CD8-positive, alpha-beta T cell (primary cell): ENCODE measurements at regions of chr22 and their contacts with region 1.

Region 1: GRCh38 chr22:44497218-44497904 is 672 bp downstream of the RTL6 start:
- DNase-seq: peak in 2 of 9 experiments; percentile 30 to 54
- ATAC-seq: no peak
- H3K4me3 ChIP-seq: peak overlapping the region; percentile 46 to 65
- H3K4me3 Mint-ChIP-seq: peak overlapping the region; percentile 77
- H3K27ac ChIP-seq: peak overlapping the region; percentile 64 to 81
- H3K27ac Mint-ChIP-seq: peak overlapping the region; percentile 81
- H3K4me1 ChIP-seq: peaks cover 44% of the 10 kb centered on the region
- H3K4me1 Mint-ChIP-seq: peaks cover 38% of the 10 kb centered on the region
- H3K27me3 ChIP-seq: no peaks in the 10 kb centered on the region
- H3K27me3 Mint-ChIP-seq: no peaks in the 10 kb centered on the region
- CTCF ChIP-seq: no peak

Region 2: GRCh38 chr22:43955040-43955882 is 542.1 kb before region 1 on chr22 and contains the start of gene SAMM50:
- CTCF ChIA-PET with region 1: no interaction called
- POLR2A ChIA-PET with region 1: no interaction called
- intact Hi-C with region 1: loop called in 1 of 2 experiments (anchors 1 kb)
- DNase-seq: peak; percentile 82 to 95 (median 92)
- ATAC-seq: peak; percentile 98
- H3K4me3 ChIP-seq: peak within 1 kb of the TSS; percentile 86 to 91
- H3K4me3 Mint-ChIP-seq: peak within 1 kb of the TSS; percentile 97
- H3K27ac ChIP-seq: peak within 1 kb of the TSS; percentile 83 to 89
- H3K27ac Mint-ChIP-seq: peak within 1 kb of the TSS; percentile 93
- H3K4me1 ChIP-seq: peaks cover 22% of the 10 kb centered on the region
- H3K4me1 Mint-ChIP-seq: peaks cover 44% of the 10 kb centered on the region
- H3K27me3 ChIP-seq: no peaks in the 10 kb centered on the region
- H3K27me3 Mint-ChIP-seq: peaks cover 10% of the 10 kb centered on the region
- CTCF ChIP-seq: no peak
- total RNA-seq, gene SAMM50: 20.7 to 24.9 TPM

Region 3: DNA sequence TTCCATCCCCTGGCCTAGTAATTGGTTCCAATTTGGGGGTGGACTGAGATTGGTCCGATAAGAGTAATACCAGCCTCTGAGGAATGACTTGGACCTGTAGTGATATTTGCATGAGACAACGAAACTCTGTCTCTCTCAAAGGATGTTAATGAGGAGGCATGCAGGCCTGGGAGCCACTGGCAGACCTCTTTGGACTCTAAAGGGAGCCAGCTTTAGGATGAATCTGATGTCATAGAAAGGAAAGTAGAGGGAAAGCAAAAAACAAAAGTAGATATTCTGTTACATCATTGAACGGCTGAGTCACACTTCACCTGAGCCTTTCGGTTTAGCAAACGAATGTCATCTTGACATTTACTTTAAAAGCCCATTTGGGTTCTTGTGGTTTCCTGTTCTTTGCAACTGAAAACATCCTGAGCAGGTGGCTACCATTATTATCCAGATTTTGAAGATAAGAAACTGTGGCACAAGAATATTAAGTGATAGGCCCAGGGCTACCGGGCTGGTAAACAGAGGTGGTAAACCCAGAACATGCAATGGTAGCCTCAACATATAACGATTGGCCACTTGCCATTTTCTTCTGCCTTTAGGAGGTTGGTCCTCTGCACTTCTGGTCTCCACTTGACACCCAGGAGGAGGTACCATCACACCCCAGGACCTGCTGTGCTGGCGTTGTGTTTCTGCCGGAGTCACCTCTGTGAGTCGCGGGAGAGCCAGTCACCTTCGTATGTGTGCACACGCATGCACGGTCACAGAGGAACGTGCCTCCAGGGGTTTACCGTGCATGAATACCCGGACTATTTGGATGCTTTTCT is 42.0 kb before region 1 on chr22:
- CTCF ChIA-PET with region 1: no interaction called
- POLR2A ChIA-PET with region 1: no interaction called
- intact Hi-C with region 1: loop called (anchors 1 to 2 kb)
- DNase-seq: peak; percentile 19 to 87 (median 58)
- ATAC-seq: peak; percentile 75
- H3K4me3 ChIP-seq: peak overlapping the region in 1 of 2 experiments; percentile 0
- H3K4me3 Mint-ChIP-seq: peak overlapping the region; percentile 43
- H3K27ac ChIP-seq: peak overlapping the region; percentile 33 to 78
- H3K27ac Mint-ChIP-seq: peak overlapping the region; percentile 91
- H3K4me1 ChIP-seq: peaks cover 23% of the 10 kb centered on the region
- H3K4me1 Mint-ChIP-seq: peaks cover 27% of the 10 kb centered on the region
- H3K27me3 ChIP-seq: no peaks in the 10 kb centered on the region
- H3K27me3 Mint-ChIP-seq: no peaks in the 10 kb centered on the region
- CTCF ChIP-seq: no peak

Region 4: GRCh38 chr22:44620129-44620840 is 122.9 kb after region 1 on chr22:
- CTCF ChIA-PET with region 1: no interaction called
- POLR2A ChIA-PET with region 1: no interaction called
- intact Hi-C with region 1: loop called in 1 of 2 experiments (anchors 1 kb)
- DNase-seq: peak; percentile 80 to 96 (median 90)
- ATAC-seq: peak; percentile 83
- H3K4me3 ChIP-seq: peak overlapping the region; percentile 44 to 47
- H3K4me3 Mint-ChIP-seq: no peak overlapping the region
- H3K27ac ChIP-seq: peak overlapping the region; percentile 58 to 65
- H3K27ac Mint-ChIP-seq: no peak overlapping the region
- H3K4me1 ChIP-seq: peaks cover 22% of the 10 kb centered on the region
- H3K4me1 Mint-ChIP-seq: peaks cover 7% of the 10 kb centered on the region
- H3K27me3 ChIP-seq: peaks cover 0 to 8% of the 10 kb centered on the region in 2 experiments
- H3K27me3 Mint-ChIP-seq: no peaks in the 10 kb centered on the region
- CTCF ChIP-seq: no peak

Region 5: DNA sequence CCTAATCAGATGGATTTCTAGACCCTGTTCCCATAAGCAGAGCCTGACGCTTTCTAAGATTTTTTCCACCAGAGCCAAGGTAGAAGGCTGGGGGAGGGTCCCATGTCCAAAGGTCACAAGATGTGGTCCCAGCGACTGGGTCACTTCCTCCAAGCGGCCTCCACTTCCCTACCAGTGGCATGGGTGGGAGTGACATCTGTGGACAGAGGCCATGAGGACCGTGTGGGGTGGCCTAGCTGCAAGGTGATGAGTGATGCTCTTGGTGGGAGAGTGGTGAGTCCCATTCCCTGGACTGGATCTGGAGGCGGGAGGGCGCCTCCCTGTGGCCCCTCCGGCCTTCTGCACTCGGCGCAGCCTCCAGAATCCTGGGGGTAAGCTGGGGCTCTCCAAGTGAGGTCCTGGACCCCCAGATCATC is 172.2 kb after region 1 on chr22:
- CTCF ChIA-PET with region 1: no interaction called
- POLR2A ChIA-PET with region 1: no interaction called
- intact Hi-C with region 1: loop called in 1 of 2 experiments (anchors 2 kb)
- DNase-seq: peak in 2 of 9 experiments; percentile 40 to 57
- ATAC-seq: no peak
- H3K4me3 ChIP-seq: peak overlapping the region; percentile 60 to 69
- H3K4me3 Mint-ChIP-seq: peak overlapping the region; percentile 78
- H3K27ac ChIP-seq: no peak overlapping the region
- H3K27ac Mint-ChIP-seq: peak overlapping the region; percentile 73
- H3K4me1 ChIP-seq: peaks cover 63% of the 10 kb centered on the region
- H3K4me1 Mint-ChIP-seq: peaks cover 67% of the 10 kb centered on the region
- H3K27me3 ChIP-seq: no peaks in the 10 kb centered on the region
- H3K27me3 Mint-ChIP-seq: no peaks in the 10 kb centered on the region
- CTCF ChIP-seq: peak; percentile 13